Colonic mucosa (tissue), 4 donors: ENCODE measurements at regions of chr19 and their contacts with region 1.

Region 1: GRCh38 chr19:6632002-6632621 is 37.8 kb downstream of the TNFSF14 start:
- DNase-seq: peak; percentile 89
- H3K4me3 ChIP-seq: no peak overlapping the region
- H3K27ac ChIP-seq: no peak overlapping the region
- H3K4me1 ChIP-seq: no peaks in the 10 kb centered on the region
- H3K27me3 ChIP-seq: no peaks in the 10 kb centered on the region
- CTCF ChIP-seq: peak; percentile 69

Region 2: GRCh38 chr19:6516659-6517291 is 115.3 kb before region 1 on chr19:
- intact Hi-C with region 1: loop called (anchors 2 kb)
- DNase-seq: peak; percentile 94
- H3K4me3 ChIP-seq: peak overlapping the region; percentile 59
- H3K27ac ChIP-seq: peak overlapping the region; percentile 63
- H3K4me1 ChIP-seq: no peaks in the 10 kb centered on the region
- H3K27me3 ChIP-seq: no peaks in the 10 kb centered on the region
- CTCF ChIP-seq: peak; percentile 95

Region 3: GRCh38 chr19:6753178-6754031 is 121.3 kb after region 1 on chr19:
- intact Hi-C with region 1: loop called (anchors 10 kb)
- DNase-seq: peak; percentile 94
- H3K4me3 ChIP-seq: peak overlapping the region; percentile 22
- H3K27ac ChIP-seq: peak overlapping the region; percentile 88
- H3K4me1 ChIP-seq: no peaks in the 10 kb centered on the region
- H3K27me3 ChIP-seq: no peaks in the 10 kb centered on the region
- CTCF ChIP-seq: peak; percentile 41

Region 4: DNA sequence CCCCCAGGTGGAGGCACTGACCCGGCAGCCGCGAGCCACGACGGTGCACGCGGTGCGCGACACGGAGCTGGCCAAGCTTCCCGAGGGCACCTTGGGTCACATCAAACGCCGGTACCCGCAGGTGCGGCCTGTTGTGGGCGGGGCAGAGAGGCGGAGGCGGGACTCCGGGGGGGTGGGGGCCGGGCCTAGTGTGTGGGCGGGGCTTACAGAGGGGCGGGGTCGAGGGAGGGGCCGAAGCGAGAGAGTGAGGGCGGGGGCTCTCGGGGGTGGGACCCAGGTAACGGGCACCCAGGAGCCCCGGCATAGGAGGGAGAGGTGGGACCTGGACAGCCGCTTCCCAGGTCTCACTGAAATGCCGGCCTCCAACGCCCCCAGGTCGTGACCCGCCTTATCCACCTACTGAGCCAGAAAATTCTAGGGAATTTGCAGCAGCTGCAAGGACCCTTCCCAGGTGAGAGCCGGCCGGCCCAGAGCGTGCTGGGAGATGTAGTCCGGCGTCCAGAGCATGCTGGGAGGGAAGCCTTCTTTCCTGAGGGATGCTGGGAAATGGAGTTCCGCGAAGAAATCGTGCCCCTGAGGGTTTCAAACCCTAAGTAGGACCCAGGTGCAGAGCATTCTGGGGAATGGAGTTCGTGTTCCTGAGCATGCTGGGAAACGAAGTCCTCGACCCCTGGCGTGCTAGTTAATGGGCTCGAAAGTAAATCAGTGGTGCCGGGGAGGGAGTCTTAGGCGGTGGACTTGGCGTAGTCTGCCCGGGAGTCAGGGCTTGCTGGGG is 919.1 kb after region 1 on chr19:
- intact Hi-C with region 1: no loop called
- DNase-seq: peak; percentile 83
- H3K4me3 ChIP-seq: peak overlapping the region; percentile 26
- H3K27ac ChIP-seq: no peak overlapping the region
- H3K4me1 ChIP-seq: no peaks in the 10 kb centered on the region
- H3K27me3 ChIP-seq: no peaks in the 10 kb centered on the region
- CTCF ChIP-seq: no peak